Mammary epithelial cell (primary cell): ENCODE measurements at regions of chr5 and their contacts with region 1.

Region 1: DNA sequence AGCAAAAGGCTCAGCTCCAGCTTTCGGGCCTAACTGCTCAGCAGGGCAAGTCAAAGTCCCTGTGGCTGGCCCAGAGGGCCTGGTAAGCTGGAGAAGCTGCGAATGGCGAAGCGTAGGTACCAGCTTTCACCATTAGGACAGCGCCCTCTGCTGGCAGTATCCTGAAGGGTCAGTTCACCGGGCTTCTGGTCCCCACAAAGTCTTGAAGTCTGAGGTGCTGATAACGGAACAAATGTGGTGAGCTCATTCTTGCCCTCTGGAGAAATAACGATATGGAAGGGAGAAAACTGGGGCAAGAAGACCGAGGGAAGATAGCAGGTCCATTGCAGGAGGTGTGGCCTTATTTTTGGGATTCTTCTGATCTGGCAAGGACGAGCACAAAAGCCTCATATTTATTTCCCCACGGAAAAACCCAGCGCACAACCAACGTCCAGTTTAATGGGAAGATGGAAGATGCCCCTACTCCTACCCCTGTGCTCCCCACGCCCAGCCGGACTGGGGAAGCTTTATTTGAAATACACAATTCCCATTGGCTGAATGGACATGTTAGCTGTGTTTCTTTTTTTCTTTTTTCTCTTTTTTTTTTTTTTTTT is 7.2 kb downstream of the SOWAHA start:
- DNase-seq: peak; percentile 72
- H3K4me3 ChIP-seq: no peak overlapping the region
- H3K27ac ChIP-seq: no peak overlapping the region
- H3K4me1 ChIP-seq: peaks cover 3% of the 10 kb centered on the region
- H3K27me3 ChIP-seq: no peaks in the 10 kb centered on the region
- CTCF ChIP-seq: peak; percentile 76 to 93

Region 2: DNA sequence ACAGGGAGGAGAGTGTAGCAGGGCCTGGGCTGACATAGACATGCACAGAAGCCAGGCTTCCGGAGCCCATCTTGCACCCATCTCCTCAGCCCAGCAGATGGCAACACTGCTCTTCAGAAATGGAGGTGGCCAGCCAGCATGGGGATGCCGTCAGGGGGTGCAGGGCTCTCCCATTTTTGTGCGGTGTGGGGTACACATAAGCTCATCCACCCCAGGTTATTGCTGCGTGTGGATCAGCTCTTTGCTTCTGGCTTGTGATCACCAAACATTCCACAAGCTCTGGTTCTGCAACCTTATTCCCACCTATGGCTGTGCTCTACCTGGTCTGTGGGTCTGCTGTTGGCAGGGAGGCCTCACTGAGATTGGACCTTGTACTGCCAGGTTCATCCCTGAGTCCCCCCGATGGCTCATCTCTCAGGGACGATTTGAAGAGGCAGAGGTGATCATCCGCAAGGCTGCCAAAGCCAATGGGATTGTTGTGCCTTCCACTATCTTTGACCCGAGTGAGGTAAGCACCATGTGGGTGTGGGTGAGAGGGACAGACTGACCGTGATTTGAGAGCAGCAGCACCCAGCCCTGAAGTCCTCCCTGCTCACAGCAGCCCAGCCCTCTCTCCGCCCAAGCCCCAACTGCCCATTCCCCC is 433.5 kb before region 1 on chr5:
- CTCF ChIA-PET with region 1: no interaction called
- dilution Hi-C with region 1: no loop called
- in situ Hi-C with region 1: no loop called
- intact Hi-C with region 1: loop called (anchors 5 kb)
- DNase-seq: peak; percentile 58
- H3K4me3 ChIP-seq: no peak overlapping the region
- H3K27ac ChIP-seq: no peak overlapping the region
- H3K4me1 ChIP-seq: peaks cover 47% of the 10 kb centered on the region
- H3K27me3 ChIP-seq: no peaks in the 10 kb centered on the region
- CTCF ChIP-seq: peak; percentile 75 to 84

Region 3: DNA sequence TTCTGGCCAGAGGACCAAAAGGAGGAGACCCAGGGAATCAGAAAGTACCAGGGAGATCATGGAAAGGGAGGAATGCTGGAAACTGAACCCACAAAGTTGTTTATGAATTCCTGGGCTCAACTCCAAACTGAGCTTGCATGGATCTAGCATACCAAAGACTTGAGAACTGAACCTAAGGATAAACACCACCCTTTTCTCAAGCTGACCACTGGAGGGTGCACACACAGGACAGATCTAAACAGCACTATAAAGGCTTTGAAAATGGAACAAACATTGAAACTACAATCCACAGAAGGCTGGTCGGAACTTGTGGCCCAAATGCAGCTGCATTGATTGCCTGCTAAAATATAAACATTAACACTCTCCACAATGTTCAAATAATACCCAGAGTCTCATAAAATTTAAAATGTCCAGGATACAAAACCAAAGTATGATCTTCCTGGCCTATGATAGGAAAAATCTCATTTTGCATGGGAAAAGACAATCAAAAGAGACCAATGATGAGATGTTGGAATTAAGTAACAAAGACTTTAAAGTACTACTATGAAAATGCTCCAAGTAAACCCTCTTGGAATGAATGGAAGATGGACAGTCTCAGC is 314.1 kb before region 1 on chr5:
- CTCF ChIA-PET with region 1: no interaction called
- dilution Hi-C with region 1: no loop called
- in situ Hi-C with region 1: no loop called
- intact Hi-C with region 1: loop called (anchors 1 kb)
- DNase-seq: peak; percentile 52
- H3K4me3 ChIP-seq: no peak overlapping the region
- H3K27ac ChIP-seq: no peak overlapping the region
- H3K4me1 ChIP-seq: peaks cover 11% of the 10 kb centered on the region
- H3K27me3 ChIP-seq: no peaks in the 10 kb centered on the region
- CTCF ChIP-seq: peak; percentile 58 to 62

Region 4: GRCh38 chr5:132661231-132662003 is 158.8 kb before region 1 on chr5:
- CTCF ChIA-PET with region 1: no interaction called
- dilution Hi-C with region 1: no loop called
- in situ Hi-C with region 1: no loop called
- intact Hi-C with region 1: loop called (anchors 2 kb)
- DNase-seq: no peak
- H3K4me3 ChIP-seq: no peak overlapping the region
- H3K27ac ChIP-seq: no peak overlapping the region
- H3K4me1 ChIP-seq: peaks cover 1% of the 10 kb centered on the region
- H3K27me3 ChIP-seq: peaks cover 3% of the 10 kb centered on the region
- CTCF ChIP-seq: no peak

Region 5: GRCh38 chr5:132753135-132753987 is 66.9 kb before region 1 on chr5:
- CTCF ChIA-PET with region 1: interaction called, 16 read pairs
- dilution Hi-C with region 1: no loop called
- in situ Hi-C with region 1: no loop called
- intact Hi-C with region 1: loop called (anchors 1 kb)
- DNase-seq: peak; percentile 24
- H3K4me3 ChIP-seq: no peak overlapping the region
- H3K27ac ChIP-seq: no peak overlapping the region
- H3K4me1 ChIP-seq: no peaks in the 10 kb centered on the region
- H3K27me3 ChIP-seq: no peaks in the 10 kb centered on the region
- CTCF ChIP-seq: peak in 1 of 2 donors; percentile 47

Region 6: DNA sequence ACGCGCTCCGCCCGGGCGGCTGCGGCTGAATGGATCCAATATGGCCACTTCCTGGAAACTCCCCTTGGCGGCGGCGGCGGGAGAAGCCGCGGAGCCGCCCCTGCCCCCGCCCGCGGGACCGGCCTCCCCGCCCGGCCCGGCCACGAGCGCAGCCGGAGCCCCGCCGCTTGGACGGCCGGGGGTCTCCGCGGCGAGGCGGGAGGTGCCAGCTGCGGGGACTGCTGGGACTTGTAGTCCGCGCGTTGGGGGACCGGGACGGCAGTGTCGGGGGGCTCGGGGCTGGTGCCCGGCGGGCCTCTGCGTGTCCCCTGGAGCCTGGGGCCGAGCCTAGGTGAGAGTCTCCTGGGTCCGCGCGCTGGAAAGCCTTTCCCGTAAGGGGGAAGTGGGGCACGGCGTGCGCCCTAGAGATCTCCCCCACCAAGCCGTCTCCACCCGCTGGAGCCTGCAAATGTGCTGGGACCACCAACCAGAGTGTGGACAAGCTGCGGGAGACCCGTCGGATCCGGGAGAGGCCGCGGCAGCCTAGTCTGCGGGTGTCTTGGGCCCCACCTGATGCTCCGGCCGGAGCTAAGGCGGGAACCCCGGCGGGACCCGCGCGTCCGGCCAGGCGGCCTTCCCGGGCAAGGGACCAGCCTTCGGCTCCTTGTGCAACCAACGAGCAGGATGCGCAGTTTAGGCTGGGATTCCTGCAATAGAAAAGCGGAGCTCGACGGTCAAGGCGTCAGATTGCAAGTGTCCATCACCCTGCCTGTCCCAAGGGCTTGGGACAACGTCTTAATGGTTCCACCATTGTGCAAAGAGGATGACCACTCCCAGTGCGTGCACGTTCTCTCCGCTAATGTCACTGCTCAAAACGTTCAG is 42.8 kb before region 1 on chr5 and contains the start of gene SEPTIN8:
- CTCF ChIA-PET with region 1: interaction called, 9 read pairs
- dilution Hi-C with region 1: loop called (anchors 5 kb)
- in situ Hi-C with region 1: no loop called
- intact Hi-C with region 1: loop called (anchors 1 kb)
- DNase-seq: peak; percentile 29
- H3K4me3 ChIP-seq: peak within 1 kb of the TSS; percentile 68 to 72 (median 70)
- H3K27ac ChIP-seq: peak within 1 kb of the TSS; percentile 36
- H3K4me1 ChIP-seq: peaks cover 33% of the 10 kb centered on the region
- H3K27me3 ChIP-seq: no peaks in the 10 kb centered on the region
- CTCF ChIP-seq: no peak
- total RNA-seq, gene SEPTIN8: 41.0 to 57.5 TPM

Region 7: DNA sequence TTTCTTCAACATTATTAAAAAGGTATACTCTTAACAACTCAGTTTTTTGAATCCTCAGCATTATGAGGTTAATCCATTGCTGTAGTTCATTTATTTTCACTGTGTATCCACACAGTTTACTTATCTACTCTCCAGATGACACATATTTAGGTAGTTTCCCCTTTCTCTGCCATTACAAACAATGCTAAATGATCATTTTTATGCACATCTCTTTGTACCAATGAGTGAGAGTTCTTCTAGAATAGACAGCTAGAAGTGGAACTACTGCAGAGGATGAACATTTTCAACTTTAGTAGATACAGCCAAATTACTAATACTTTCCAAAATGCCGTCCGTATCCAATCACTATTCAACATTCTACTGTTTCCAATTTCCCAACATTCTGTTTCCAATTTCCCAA is 131.6 kb after region 1 on chr5:
- CTCF ChIA-PET with region 1: no interaction called
- dilution Hi-C with region 1: no loop called
- in situ Hi-C with region 1: no loop called
- intact Hi-C with region 1: no loop called
- DNase-seq: no peak
- H3K4me3 ChIP-seq: no peak overlapping the region
- H3K27ac ChIP-seq: no peak overlapping the region
- H3K4me1 ChIP-seq: peaks cover 7% of the 10 kb centered on the region
- H3K27me3 ChIP-seq: no peaks in the 10 kb centered on the region
- CTCF ChIP-seq: no peak